Activated CD4-positive, alpha-beta memory T cell treated with anti-CD3 and anti-CD28 coated beads for 36 hours (primary cell): ENCODE measurements at regions of chr1 and their contacts with region 1.

Region 1: GRCh38 chr1:37692078-37692833 is at the start of gene CDCA8:
- DNase-seq: peak; percentile 99
- H3K4me3 Mint-ChIP-seq: peak within 1 kb of the TSS; percentile 97
- H3K27ac Mint-ChIP-seq: peak within 1 kb of the TSS; percentile 88
- H3K4me1 Mint-ChIP-seq: peaks cover 31% of the 10 kb centered on the region
- H3K27me3 Mint-ChIP-seq: no peaks in the 10 kb centered on the region
- total RNA-seq, gene CDCA8: 55.0 to 56.0 TPM

Region 2: DNA sequence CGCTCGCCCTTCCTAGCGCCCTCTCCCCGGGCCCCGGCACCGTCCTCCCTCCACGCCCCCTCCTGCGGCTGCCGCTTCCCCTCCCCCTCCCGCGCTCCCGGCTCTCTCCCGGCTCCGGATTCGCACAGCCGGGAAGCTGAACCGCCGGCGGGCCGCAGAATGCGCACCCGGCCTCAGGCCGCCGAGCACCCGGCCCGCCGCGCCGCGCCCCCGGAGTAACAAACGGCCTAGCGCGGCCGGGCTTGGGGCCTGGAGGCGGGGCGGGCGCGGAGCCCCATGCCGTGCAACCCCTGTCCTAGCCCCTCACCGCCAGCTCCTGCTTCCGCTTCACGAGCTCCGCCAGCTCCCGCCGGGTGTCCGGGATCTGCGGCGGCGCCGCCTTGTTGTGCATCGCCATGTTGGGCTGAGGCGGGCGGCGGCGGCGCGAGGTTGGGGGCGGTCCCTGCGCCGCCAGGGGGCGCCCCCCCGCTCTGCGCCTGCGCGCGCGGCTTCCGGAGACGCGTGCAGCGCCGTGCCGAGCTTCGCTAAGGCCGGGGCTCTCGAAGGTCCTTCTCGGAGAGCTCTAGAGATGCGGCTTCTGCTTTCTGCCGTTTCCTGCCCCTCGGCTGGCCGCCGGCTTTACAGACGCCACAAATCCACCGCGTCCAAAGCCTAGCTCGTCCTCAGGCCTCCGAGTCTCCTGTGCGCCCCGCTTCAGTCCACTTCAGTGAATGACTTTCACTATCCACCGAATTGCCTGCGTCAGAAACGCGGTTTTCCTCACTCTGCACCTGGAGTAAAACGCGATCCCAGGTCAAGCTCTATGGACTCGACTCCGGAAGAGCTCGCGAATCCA is 177.7 kb before region 1 on chr1 and contains the start of gene MEAF6:
- CTCF ChIA-PET with region 1: interaction called, 4 read pairs
- POLR2A ChIA-PET with region 1: no interaction called
- intact Hi-C with region 1: loop called (anchors 2 kb)
- DNase-seq: peak; percentile 87
- H3K4me3 Mint-ChIP-seq: peak within 1 kb of the TSS; percentile 98
- H3K27ac Mint-ChIP-seq: peak within 1 kb of the TSS; percentile 94
- H3K4me1 Mint-ChIP-seq: peaks cover 49% of the 10 kb centered on the region
- H3K27me3 Mint-ChIP-seq: no peaks in the 10 kb centered on the region
- total RNA-seq, gene MEAF6: 89.6 to 89.7 TPM

Region 3: GRCh38 chr1:37574834-37575480 is 117.3 kb before region 1 on chr1:
- CTCF ChIA-PET with region 1: interaction called, 3 read pairs
- POLR2A ChIA-PET with region 1: interaction called, 3 read pairs
- intact Hi-C with region 1: loop called (anchors 5 kb)
- DNase-seq: peak; percentile 17
- H3K4me3 Mint-ChIP-seq: no peak overlapping the region
- H3K27ac Mint-ChIP-seq: peak overlapping the region; percentile 76
- H3K4me1 Mint-ChIP-seq: peaks cover 61% of the 10 kb centered on the region
- H3K27me3 Mint-ChIP-seq: no peaks in the 10 kb centered on the region

Region 4: GRCh38 chr1:37739222-37739621 is 47.0 kb after region 1 on chr1:
- CTCF ChIA-PET with region 1: no interaction called
- POLR2A ChIA-PET with region 1: interaction called, 3 read pairs
- intact Hi-C with region 1: loop called (anchors 1 kb)
- DNase-seq: peak; percentile 33
- H3K4me3 Mint-ChIP-seq: no peak overlapping the region
- H3K27ac Mint-ChIP-seq: no peak overlapping the region
- H3K4me1 Mint-ChIP-seq: peaks cover 6% of the 10 kb centered on the region
- H3K27me3 Mint-ChIP-seq: peaks cover 39% of the 10 kb centered on the region

Region 5: GRCh38 chr1:37807555-37808368 is 115.5 kb after region 1 on chr1 and contains the starts of genes C1orf122 and YRDC:
- CTCF ChIA-PET with region 1: interaction called, 8 read pairs
- POLR2A ChIA-PET with region 1: interaction called, 11 read pairs
- intact Hi-C with region 1: loop called (anchors 1 kb)
- DNase-seq: peak; percentile 95
- H3K4me3 Mint-ChIP-seq: peak within 1 kb of the TSS; percentile 95
- H3K27ac Mint-ChIP-seq: peak within 1 kb of the TSS; percentile 96
- H3K4me1 Mint-ChIP-seq: peaks cover 40% of the 10 kb centered on the region
- H3K27me3 Mint-ChIP-seq: no peaks in the 10 kb centered on the region
- total RNA-seq, gene C1orf122: 18.1 to 19.7 TPM
- total RNA-seq, gene YRDC: 34.1 to 36.1 TPM

Region 6: DNA sequence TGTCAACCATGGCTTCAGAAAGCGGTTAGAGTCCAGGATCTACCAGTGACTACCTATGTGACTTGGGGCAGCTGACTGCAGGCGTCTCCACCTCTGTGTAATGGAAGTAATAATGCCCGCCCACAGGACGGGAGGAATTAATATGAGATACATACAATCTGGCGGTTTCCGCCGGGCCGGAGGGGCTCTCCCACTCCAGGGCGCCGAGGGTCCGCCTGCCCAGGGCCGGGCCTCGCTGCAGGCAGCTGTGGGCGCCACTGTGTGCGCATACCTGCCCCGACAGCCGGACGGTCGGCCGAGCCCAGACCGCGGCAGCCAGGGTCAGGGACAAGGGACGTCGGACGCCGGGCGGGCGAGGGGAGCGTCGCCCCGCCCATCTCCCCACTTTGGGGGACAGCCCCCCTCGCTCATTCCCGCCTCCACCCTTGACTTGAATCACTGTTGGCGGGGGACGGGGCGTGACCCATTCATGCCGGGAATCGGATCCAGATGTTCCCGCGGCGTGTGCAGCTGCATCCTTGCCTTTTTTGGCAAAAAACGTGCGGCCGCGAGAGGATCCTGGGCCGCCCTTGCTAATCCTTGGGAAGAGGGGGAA is 303.6 kb after region 1 on chr1:
- CTCF ChIA-PET with region 1: no interaction called
- POLR2A ChIA-PET with region 1: no interaction called
- intact Hi-C with region 1: loop called (anchors 5 kb)
- DNase-seq: peak; percentile 59
- H3K4me3 Mint-ChIP-seq: peak overlapping the region; percentile 45
- H3K27ac Mint-ChIP-seq: peak overlapping the region; percentile 66
- H3K4me1 Mint-ChIP-seq: peaks cover 31% of the 10 kb centered on the region
- H3K27me3 Mint-ChIP-seq: no peaks in the 10 kb centered on the region